ENCODE measurements at regions of chr3 and their contacts with region 1.

Region 1: GRCh38 chr3:50260027-50260941 is 8.7 kb upstream of the SEMA3B start:
- DNase-seq: peak; percentile 71
- H3K4me3 ChIP-seq: peak overlapping the region; percentile 53
- H3K27ac ChIP-seq: peak overlapping the region; percentile 82
- H3K4me1 ChIP-seq: peaks cover 12% of the 10 kb centered on the region
- H3K27me3 ChIP-seq: no peaks in the 10 kb centered on the region
- CTCF ChIP-seq: peak; percentile 68

Region 2: DNA sequence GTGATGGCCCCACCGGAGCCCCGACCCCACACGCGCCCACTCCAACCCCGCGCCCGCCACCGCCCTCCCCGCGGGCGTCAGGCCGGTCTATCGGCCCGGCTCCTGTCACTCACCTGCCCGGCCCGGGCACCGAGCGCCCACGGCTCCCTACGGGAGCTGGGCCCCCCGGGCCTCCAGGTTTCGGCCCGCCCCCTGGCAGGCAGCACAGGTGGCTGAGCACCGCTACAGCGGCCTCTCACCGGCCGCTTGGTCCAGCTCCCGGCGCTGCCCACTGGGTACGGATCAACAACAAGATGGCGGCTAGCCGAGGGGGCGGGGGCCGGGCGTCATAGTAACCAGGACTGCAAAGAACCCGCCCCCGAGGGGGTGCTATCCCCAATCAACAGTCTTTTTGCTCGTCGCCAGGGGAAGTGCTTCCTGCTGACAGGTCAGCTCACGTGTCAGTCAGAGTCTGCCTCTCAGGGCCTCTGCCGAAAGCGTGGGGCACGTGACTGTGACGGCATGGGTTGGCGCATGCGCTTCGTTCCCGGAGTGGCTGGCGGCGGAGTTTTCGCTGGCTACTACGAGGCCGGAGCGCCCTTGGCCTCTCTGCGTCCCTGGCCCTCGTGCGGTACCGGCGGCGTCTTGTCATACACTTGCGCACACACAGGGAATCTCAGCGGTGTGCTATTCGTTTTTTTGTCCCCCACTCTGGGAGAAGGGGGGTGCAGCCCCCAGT is 473.9 kb before region 1 on chr3 and contains the start of gene IP6K1:
- CTCF ChIA-PET with region 1: no interaction called
- POLR2A ChIA-PET with region 1: no interaction called
- intact Hi-C with region 1: no loop called
- DNase-seq: peak; percentile 98
- H3K4me3 ChIP-seq: peak within 1 kb of the TSS; percentile 84
- H3K27ac ChIP-seq: peak within 1 kb of the TSS; percentile 81
- H3K4me1 ChIP-seq: no peaks in the 10 kb centered on the region
- H3K27me3 ChIP-seq: no peaks in the 10 kb centered on the region
- CTCF ChIP-seq: no peak
- total RNA-seq, gene IP6K1: 25.8 and 29.0 TPM in 2 replicates

Region 3: DNA sequence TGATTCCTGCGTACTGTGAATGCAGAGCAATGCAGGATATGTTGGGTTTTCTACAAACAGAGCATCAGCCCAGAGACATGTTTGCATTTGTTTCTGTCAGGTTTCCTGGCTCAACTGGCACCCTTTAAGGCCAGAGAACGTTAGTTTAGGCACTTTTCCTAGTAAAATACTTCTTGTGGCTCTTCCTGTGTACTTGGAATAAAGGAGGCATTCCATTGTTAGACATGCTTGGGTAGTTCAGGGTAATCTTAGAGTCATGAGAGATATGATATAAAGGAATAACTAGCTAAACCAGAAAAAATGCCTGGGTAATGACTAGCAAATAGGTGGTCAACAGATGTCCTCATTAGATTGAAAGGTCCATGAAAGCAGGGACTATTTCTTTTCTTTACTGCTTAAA is 231.9 kb before region 1 on chr3:
- CTCF ChIA-PET with region 1: no interaction called
- POLR2A ChIA-PET with region 1: no interaction called
- intact Hi-C with region 1: no loop called
- DNase-seq: no peak
- H3K4me3 ChIP-seq: no peak overlapping the region
- H3K27ac ChIP-seq: no peak overlapping the region
- H3K4me1 ChIP-seq: no peaks in the 10 kb centered on the region
- H3K27me3 ChIP-seq: no peaks in the 10 kb centered on the region
- CTCF ChIP-seq: no peak

Region 4: GRCh38 chr3:50121416-50122032 is 138.8 kb before region 1 on chr3:
- CTCF ChIA-PET with region 1: no interaction called
- POLR2A ChIA-PET with region 1: no interaction called
- intact Hi-C with region 1: loop called (anchors 10 kb)
- DNase-seq: peak; percentile 72
- H3K4me3 ChIP-seq: no peak overlapping the region
- H3K27ac ChIP-seq: no peak overlapping the region
- H3K4me1 ChIP-seq: peaks cover 5% of the 10 kb centered on the region
- H3K27me3 ChIP-seq: no peaks in the 10 kb centered on the region
- CTCF ChIP-seq: peak; percentile 68

Region 5: GRCh38 chr3:50245831-50246516 is 14.3 kb before region 1 on chr3:
- CTCF ChIA-PET with region 1: interaction called, 3 read pairs
- POLR2A ChIA-PET with region 1: interaction called, 13 read pairs
- intact Hi-C with region 1: no loop called
- DNase-seq: peak; percentile 85
- H3K4me3 ChIP-seq: peak overlapping the region; percentile 42
- H3K27ac ChIP-seq: peak overlapping the region; percentile 74
- H3K4me1 ChIP-seq: peaks cover 18% of the 10 kb centered on the region
- H3K27me3 ChIP-seq: no peaks in the 10 kb centered on the region
- CTCF ChIP-seq: peak; percentile 85

Region 6: GRCh38 chr3:50347194-50347918 is 87.1 kb after region 1 on chr3:
- CTCF ChIA-PET with region 1: no interaction called
- POLR2A ChIA-PET with region 1: no interaction called
- intact Hi-C with region 1: no loop called
- DNase-seq: peak; percentile 68
- H3K4me3 ChIP-seq: no peak overlapping the region
- H3K27ac ChIP-seq: no peak overlapping the region
- H3K4me1 ChIP-seq: peaks cover 11% of the 10 kb centered on the region
- H3K27me3 ChIP-seq: no peaks in the 10 kb centered on the region
- CTCF ChIP-seq: peak; percentile 60

Region 7: GRCh38 chr3:50536471-50537180 is 276.3 kb after region 1 on chr3:
- CTCF ChIA-PET with region 1: no interaction called
- POLR2A ChIA-PET with region 1: no interaction called
- intact Hi-C with region 1: no loop called
- DNase-seq: no peak
- H3K4me3 ChIP-seq: no peak overlapping the region
- H3K27ac ChIP-seq: no peak overlapping the region
- H3K4me1 ChIP-seq: no peaks in the 10 kb centered on the region
- H3K27me3 ChIP-seq: no peaks in the 10 kb centered on the region
- CTCF ChIP-seq: no peak

Measured in A673 (cell line).